ENCODE measurements at regions of chr12 and their contacts with region 1.

Region 1: DNA sequence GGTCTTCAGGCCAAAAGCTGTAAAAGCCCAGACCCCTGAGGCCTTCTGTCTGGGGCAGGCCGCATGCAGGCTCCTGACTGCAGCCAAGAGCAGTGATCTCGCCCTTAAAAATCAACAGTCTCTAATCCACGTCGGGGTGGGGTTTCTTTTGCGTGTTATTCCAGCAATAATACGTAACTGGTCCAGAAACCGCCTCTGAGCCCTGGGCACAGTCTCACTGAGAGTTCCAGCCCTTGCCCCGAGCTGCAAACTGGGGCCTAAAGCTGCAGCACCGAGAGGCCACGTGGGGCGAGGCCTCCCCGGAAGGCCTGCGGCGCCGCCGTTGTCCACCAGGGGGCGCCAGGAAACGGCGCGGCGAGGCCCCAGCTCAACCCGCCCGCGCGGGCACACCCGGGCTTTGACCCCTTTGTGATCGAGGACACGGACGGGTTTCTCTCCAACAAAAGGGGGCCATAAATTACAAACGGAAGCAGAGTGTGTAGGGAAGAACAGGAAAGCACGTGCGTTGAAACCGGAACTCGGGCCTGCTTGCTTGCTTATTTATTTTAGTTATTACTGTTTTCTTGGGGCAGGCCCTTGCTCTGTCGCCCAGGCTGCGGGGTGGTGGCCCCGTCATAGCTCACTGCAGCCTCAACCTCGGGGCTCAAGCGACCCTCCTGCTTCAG is 87.2 kb downstream of the NINJ2 start:
- DNase-seq: no peak
- H3K4me3 ChIP-seq: peak overlapping the region; percentile 8; the same call in 1 of the 2 replicates
- CTCF ChIP-seq: peak; percentile 92

Region 2: GRCh38 chr12:389139-390096 is 186.7 kb before region 1 on chr12 and contains the start of gene KDM5A:
- CTCF ChIA-PET with region 1: no interaction called
- POLR2A ChIA-PET with region 1: no interaction called
- DNase-seq: peak; percentile 65
- H3K4me3 ChIP-seq: peak within 1 kb of the TSS; percentile 97
- CTCF ChIP-seq: no peak

Region 3: DNA sequence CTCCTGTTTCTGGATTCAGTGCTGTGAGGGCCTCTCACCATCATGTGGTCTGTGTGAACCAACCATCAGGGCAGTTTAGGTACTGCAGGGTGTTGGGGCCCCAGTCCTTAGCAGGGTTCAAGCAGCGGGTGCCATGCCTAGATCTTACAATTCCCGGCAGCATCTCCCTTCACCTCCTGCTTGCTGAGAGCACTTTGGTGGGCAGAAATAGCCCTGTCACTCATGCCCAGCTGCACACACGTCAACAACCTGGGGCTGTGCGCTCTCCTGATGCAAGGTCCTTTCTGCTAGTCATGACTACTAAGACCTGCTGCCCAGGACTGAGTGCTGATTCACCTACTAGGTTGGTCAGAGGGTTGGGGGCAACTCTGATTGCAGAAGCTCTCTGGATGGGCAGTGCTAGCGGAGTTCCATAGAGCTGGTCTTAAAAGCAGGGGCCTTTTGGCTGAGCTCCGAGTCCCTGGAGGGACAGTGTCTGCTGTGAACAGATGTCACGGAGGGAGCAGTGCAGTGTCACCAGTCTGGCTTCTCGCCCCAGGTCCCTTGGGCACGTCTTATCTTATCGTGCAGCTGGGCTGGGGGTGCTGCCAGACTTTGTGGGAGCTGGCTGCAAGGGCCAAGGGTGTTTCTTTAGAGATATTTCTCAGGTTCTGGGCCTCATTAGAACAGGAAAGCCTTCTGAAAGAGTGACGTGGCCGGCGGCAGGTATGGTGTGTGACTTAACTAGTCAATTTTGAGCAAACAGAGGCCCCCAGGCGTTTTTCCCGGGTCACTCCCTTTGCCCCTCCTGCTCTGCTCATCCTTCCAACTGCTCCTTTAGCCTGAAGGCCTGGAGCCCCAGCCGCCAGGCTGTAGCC is 15.3 kb after region 1 on chr12:
- CTCF ChIA-PET with region 1: interaction called, 19 read pairs
- POLR2A ChIA-PET with region 1: no interaction called
- DNase-seq: no peak
- H3K4me3 ChIP-seq: no peak overlapping the region
- CTCF ChIP-seq: no peak

Region 4: DNA sequence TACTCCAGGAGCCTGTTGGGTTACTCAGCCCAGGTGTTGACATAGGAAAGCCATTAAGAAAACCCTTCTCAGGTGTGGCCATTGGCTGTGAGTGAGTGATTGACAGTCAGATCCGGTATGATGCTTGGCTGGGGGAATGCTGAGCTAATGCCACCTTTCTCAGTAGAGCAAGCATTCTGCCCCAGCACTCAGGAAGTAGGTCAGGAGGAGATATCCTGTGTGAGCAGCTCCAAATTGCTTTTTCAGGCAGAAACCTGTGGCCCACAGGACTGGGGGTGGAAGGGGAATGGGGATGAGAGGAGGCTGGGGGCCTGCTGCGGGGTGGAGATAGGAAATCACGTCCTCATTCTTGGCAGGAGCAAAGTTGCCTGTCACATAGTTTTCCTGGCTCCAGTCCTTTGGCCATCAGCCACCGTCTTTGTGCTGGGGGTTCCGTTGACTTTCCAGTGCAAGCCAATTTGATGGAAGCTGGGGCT is 31.5 kb after region 1 on chr12:
- CTCF ChIA-PET with region 1: interaction called, 27 read pairs
- POLR2A ChIA-PET with region 1: no interaction called
- DNase-seq: no peak
- H3K4me3 ChIP-seq: no peak overlapping the region
- CTCF ChIP-seq: no peak

Region 5: GRCh38 chr12:779745-780734 is 204.0 kb after region 1 on chr12:
- CTCF ChIA-PET with region 1: interaction called, 15 read pairs
- POLR2A ChIA-PET with region 1: no interaction called
- DNase-seq: peak; percentile 66
- H3K4me3 ChIP-seq: 0 out of 2 replicates have a peak overlapping the region, but pooled peaks have one; percentile 12
- CTCF ChIP-seq: no peak

Region 6: DNA sequence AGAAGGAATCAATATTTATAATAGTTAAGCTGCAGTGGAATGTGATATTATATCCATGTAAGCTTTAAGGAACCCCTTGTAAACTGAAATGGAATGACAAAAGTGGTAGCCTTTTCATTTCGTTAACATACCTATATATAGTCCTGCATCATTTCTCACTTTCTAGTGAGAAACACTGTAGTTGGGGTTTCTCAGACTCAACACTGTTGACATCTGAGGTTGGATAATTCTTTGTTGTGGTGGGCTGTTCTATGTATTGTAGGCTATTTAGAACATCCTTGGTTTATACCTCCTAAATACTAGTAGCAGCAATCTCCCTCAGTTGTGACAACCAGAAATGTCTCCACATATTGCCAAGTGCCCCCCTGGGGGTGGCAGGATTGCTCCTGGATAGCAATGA is 294.3 kb after region 1 on chr12:
- CTCF ChIA-PET with region 1: no interaction called
- POLR2A ChIA-PET with region 1: no interaction called
- DNase-seq: no peak
- H3K4me3 ChIP-seq: no peak overlapping the region
- CTCF ChIP-seq: no peak

Measured in AG04449 (cell line).